ENCODE measurements at regions of chr2 and their contacts with region 1.

Region 1: GRCh38 chr2:190005513-190005912 is 57.0 kb downstream of the MSTN start:
- DNase-seq: no peak
- H3K4me3 ChIP-seq: no peak overlapping the region
- H3K27ac ChIP-seq: no peak overlapping the region
- H3K4me1 ChIP-seq: no peaks in the 10 kb centered on the region
- H3K27me3 ChIP-seq: no peaks in the 10 kb centered on the region
- CTCF ChIP-seq: no peak

Region 2: GRCh38 chr2:189943009-189943408 is 62.5 kb before region 1 on chr2:
- CTCF ChIA-PET with region 1: no interaction called
- dilution Hi-C with region 1: loop called (anchors 5 kb)
- in situ Hi-C with region 1: no loop called
- intact Hi-C with region 1: no loop called
- DNase-seq: no peak
- H3K4me3 ChIP-seq: no peak overlapping the region
- H3K27ac ChIP-seq: no peak overlapping the region
- H3K4me1 ChIP-seq: no peaks in the 10 kb centered on the region
- H3K27me3 ChIP-seq: no peaks in the 10 kb centered on the region
- CTCF ChIP-seq: no peak

Region 3: DNA sequence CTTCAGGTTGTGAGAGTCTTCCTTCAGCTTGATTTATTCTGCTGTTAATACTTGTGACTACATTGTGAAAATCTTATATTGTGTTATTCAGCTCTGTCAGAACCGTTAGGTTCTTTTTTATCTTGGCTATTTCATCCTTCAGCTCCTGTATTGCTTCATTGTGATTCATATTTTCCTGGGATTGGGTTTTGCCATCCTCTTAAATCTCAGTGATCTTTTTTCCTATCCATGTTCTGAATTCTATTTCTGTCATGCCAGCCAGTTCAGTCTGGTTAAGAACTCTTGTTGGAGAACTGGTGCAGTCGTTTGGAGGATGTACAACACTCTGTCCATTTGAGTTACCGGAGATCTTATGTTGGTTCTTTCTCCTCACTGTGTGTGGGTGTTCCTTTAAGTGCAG is 37.9 kb after region 1 on chr2:
- CTCF ChIA-PET with region 1: no interaction called
- dilution Hi-C with region 1: loop called (anchors 5 kb)
- in situ Hi-C with region 1: no loop called
- intact Hi-C with region 1: no loop called
- DNase-seq: no peak
- H3K4me3 ChIP-seq: no peak overlapping the region
- H3K27ac ChIP-seq: no peak overlapping the region
- H3K4me1 ChIP-seq: no peaks in the 10 kb centered on the region
- H3K27me3 ChIP-seq: peaks cover 3% of the 10 kb centered on the region
- CTCF ChIP-seq: no peak

Measured in mammary epithelial cell (primary cell).